ENCODE measurements at regions of chr17 and their contacts with region 1.

Region 1: DNA sequence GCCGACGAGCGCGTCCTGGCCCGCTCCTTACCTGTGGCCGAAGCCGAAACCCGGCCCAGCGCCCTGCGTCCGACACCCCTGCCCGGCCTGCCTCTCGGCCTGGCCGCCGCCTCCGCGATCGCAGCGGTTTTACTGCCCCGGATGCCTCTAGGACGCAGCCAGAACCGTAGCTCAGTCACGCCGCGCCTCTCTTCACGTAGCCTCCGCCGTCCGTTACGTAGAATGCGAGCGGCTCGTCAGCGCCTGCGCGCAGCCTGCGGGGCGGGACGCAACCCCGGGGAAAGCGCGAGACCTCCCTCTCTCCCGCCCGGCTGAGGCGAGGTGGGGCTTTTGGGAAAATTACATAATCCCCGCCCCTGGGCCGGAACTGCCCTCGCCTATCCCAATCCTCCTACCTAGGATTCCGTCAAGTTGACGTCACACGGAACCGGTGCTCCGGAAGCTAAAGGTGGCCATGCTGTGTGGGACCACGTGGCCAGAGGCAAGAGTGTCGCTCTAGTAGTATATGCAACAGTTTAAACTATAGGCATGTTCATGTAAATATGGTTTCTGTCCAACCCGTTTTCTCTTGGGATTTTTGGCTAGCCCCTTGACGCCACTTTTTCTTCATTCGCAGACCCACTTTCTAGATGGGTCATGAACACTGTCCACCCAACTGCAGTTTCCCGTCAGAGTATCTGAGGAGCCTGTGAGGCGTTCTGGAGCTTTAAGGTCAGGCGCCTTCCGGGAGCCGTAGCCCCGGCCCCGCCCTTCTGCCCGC is at the start of gene CCDC47:
- DNase-seq: peak; percentile 100
- H3K4me3 Mint-ChIP-seq: peak within 1 kb of the TSS; percentile 99
- H3K27ac Mint-ChIP-seq: peak within 1 kb of the TSS; percentile 100
- H3K4me1 Mint-ChIP-seq: peaks cover 44% of the 10 kb centered on the region
- H3K27me3 Mint-ChIP-seq: peaks cover 2% of the 10 kb centered on the region
- total RNA-seq, gene CCDC47: 81.8 and 82.9 TPM in 2 replicates

Region 2: DNA sequence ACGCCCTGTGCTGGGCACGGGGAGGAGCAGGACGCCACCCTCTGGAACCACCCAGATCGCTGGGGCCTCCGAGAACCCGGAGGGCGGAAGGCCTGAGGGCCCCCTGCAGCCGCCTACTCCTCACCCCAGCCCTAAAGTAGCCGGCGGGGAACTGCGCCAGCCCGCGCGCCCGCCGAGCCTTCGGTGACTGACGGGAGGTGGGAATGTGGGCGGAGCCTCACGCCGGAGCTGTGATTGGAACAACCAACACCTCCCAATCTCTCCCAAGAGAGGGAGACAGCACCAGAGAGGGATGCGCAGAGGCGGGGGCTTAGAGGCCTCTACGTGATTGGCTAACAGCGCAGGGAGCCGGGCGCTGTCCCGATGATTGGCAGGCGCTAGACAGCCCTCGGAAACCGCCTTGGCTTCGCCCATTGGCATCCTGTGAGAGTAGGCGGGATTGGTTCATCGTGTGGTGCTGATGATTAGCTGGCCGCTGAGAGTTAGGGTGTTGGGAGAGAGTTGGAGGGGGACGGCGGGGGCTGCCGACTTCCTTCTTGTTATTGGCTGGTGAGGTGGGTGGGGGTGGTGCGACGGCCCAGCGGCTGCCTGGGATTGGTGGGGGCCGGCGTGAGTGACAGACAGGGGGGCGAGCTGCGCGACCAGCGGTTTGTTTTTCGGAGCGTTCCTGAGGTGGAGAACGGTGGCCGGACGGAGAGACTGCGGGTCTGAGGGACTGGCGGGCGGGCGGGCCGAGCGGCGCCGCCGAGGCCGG is 151.6 kb before region 1 on chr17 and contains the start of gene MAP3K3:
- intact Hi-C with region 1: loop called (anchors 1 kb)
- DNase-seq: peak; percentile 99
- H3K4me3 Mint-ChIP-seq: peak within 1 kb of the TSS; percentile 99
- H3K27ac Mint-ChIP-seq: peak within 1 kb of the TSS; percentile 96
- H3K4me1 Mint-ChIP-seq: peaks cover 30% of the 10 kb centered on the region
- H3K27me3 Mint-ChIP-seq: peaks cover 11% of the 10 kb centered on the region
- total RNA-seq, gene MAP3K3: 26.2 and 26.7 TPM in 2 replicates

Region 3: GRCh38 chr17:63741221-63742049 is 32.1 kb before region 1 on chr17 and contains the start of gene STRADA:
- intact Hi-C with region 1: loop called (anchors 1 kb)
- DNase-seq: peak; percentile 100
- H3K4me3 Mint-ChIP-seq: peak within 1 kb of the TSS; percentile 92
- H3K27ac Mint-ChIP-seq: peak within 1 kb of the TSS; percentile 96
- H3K4me1 Mint-ChIP-seq: peaks cover 26% of the 10 kb centered on the region
- H3K27me3 Mint-ChIP-seq: no peaks in the 10 kb centered on the region
- total RNA-seq, gene STRADA: 50.4 and 54.6 TPM in 2 replicates

Region 4: DNA sequence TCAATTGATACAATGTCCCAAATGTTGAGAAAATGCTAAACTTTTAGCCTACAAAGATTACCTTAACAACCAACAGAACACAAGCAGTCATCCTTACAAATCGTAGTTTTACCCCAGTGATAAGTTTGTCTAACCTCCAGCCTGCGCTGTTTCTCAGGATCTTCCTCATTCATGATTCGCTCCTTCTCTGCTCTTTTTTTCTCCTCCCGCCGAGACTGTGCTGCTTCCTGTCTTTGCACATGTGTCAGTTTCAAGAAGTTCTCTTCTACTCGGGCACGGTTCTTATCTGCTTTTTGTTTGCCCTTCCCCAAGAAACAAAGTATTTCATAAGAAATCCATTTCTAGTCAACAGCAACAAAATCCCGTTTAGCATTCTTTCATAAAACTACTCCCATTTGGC is 21.8 kb before region 1 on chr17:
- intact Hi-C with region 1: no loop called
- DNase-seq: peak; percentile 80
- H3K4me3 Mint-ChIP-seq: peak overlapping the region; percentile 76
- H3K27ac Mint-ChIP-seq: peak overlapping the region; percentile 79
- H3K4me1 Mint-ChIP-seq: peaks cover 13% of the 10 kb centered on the region
- H3K27me3 Mint-ChIP-seq: no peaks in the 10 kb centered on the region

Region 5: GRCh38 chr17:63827002-63827771 is 53.6 kb after region 1 on chr17 and contains the starts of genes FTSJ3 and PSMC5:
- intact Hi-C with region 1: loop called (anchors 1 kb)
- DNase-seq: peak; percentile 99
- H3K4me3 Mint-ChIP-seq: peak within 1 kb of the TSS; percentile 99
- H3K27ac Mint-ChIP-seq: peak within 1 kb of the TSS; percentile 99
- H3K4me1 Mint-ChIP-seq: peaks cover 63% of the 10 kb centered on the region
- H3K27me3 Mint-ChIP-seq: no peaks in the 10 kb centered on the region
- total RNA-seq, gene FTSJ3: 99.6 and 100 TPM in 2 replicates
- total RNA-seq, gene PSMC5: 189 and 199 TPM in 2 replicates

Region 6: DNA sequence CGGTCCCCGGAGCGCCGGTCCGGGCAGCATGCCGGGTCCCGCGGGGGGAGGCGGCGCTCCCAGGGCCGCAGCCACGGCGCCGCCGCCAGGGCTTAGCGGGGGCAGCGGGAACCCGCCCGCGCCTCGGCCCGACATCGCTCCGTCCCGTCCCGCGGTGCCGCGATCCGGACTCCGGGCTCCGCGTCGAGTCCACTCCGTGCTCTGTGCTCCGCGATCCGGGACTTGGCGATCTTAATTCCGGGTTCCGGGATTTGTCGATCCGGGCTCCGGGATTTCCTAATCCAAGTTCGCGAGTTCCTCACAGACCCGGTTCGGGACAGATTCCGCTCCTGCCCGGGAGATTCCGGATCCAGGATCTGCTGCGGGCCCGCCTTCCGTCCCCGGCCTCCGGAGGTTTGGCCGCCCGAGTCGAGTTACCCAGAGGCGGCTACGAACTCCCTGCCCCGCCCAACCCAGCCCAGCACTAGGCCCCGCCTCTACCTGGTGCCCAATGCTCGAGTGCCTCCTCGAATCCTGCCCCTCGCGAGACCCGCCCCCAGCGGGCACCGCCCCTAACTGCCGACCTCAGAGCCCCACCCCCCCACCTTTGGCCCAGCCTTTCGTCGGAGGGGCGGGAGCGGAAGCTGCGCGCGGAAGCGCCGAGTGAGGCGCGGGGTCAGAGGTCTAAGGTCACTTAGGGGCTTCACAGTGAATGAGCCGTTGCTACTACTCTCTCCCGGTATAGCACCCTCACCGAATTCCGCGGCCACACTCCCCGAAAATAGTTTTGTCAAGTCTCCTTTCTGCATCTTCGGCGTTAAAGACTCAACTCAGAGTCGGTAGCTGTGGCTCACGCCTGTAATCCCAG is 69.2 kb after region 1 on chr17 and contains the start of gene SMARCD2:
- intact Hi-C with region 1: loop called (anchors 1 kb)
- DNase-seq: peak; percentile 99
- H3K4me3 Mint-ChIP-seq: peak within 1 kb of the TSS; percentile 98
- H3K27ac Mint-ChIP-seq: peak within 1 kb of the TSS; percentile 93
- H3K4me1 Mint-ChIP-seq: peaks cover 27% of the 10 kb centered on the region
- H3K27me3 Mint-ChIP-seq: no peaks in the 10 kb centered on the region
- total RNA-seq, gene SMARCD2: 120 and 121 TPM in 2 replicates